HepG2 (cell line): ENCODE measurements at regions of chr16 and their contacts with region 1.

Region 1: GRCh38 chr16:81465375-81465943 is 20.9 kb downstream of the CMIP start:
- DNase-seq: peak; percentile 60
- ATAC-seq: peak; percentile 90
- H3K4me3 ChIP-seq: no peak overlapping the region
- H3K27ac ChIP-seq: peak overlapping the region; percentile 42
- H3K4me1 ChIP-seq: peaks cover 99% of the 10 kb centered on the region
- H3K27me3 ChIP-seq: no peaks in the 10 kb centered on the region
- CTCF ChIP-seq: no peak
- EP300 ChIP-seq: no peak
- POLR2A ChIP-seq: 0 out of 4 replicates have a peak, but pooled peaks of 1 of the 2 experiments have one; percentile 24
- RAD21 ChIP-seq: peak; percentile 24; the same call in 1 of the 2 replicates

Region 2: DNA sequence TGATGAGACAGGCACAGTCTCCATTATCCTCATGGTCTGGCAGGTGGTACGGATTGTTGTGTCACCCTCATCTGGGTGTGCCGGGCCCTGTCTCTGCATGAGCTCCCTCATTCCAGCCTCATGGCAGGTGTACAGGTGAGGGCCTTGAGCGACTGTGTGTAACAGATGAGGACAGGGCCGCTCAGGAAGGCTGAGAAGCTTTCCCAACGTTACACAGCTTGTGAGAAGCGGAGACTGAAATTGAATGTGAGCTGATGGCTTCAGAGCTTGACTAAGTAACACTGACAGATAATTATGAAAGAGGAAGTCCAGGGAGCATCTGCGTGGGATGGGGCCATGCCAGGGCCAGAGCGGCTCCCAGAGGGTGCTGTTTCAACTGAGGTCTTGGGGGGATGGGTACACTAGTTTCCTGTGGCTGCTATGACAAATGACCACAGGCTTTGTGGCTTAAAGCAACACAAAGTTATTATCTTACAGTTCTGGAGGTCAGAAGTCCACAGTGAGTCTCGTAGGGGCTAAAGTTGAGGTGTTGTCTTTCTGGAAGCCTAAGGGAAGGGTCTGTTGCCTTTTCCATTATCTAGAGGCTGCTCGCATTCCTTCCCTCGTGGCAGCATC is 15.9 kb after region 1 on chr16:
- CTCF ChIA-PET with region 1: interaction called, 3 read pairs
- POLR2A ChIA-PET with region 1: interaction called, 4 read pairs
- in situ Hi-C with region 1: no loop called
- intact Hi-C with region 1: loop called (anchors 1 kb)
- DNase-seq: peak; percentile 94
- ATAC-seq: peak; percentile 87
- H3K4me3 ChIP-seq: peak overlapping the region in 1 of 3 experiments; percentile 32; a peak in 2 of 6 replicates
- H3K27ac ChIP-seq: peak overlapping the region; percentile 60
- H3K4me1 ChIP-seq: peaks cover 79% of the 10 kb centered on the region
- H3K27me3 ChIP-seq: no peaks in the 10 kb centered on the region
- CTCF ChIP-seq: peak; percentile 55
- EP300 ChIP-seq: peak; percentile 67 to 84
- POLR2A ChIP-seq: peak in 1 of 2 experiments; percentile 25; a peak in 2 of 4 replicates
- RAD21 ChIP-seq: peak; percentile 53; the same call in 1 of the 2 replicates